BJ (cell line): ENCODE measurements at regions of chr16 and their contacts with region 1.

Region 1: DNA sequence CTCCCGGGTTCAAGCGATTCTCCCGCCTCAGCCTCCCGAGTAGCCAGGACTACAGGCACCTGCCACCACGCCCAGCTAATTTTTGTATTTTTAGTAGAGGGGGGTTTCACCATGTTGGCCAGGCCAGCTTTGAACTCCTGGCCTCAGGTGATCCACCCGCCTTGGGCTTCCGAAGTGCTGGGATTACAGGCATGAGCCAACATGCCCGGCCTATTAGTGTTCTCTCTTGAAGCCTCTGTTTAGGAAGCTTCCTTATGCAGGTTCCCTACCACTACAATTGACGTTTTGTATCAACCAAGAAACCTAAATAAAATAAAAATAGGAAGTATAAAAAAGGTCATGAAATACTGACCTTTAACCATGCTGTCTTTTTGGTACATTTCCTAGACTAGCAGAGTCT is 16.0 kb downstream of the CHST5 start:
- DNase-seq: no peak
- H3K4me3 ChIP-seq: no peak overlapping the region
- H3K27me3 ChIP-seq: no peaks in the 10 kb centered on the region
- CTCF ChIP-seq: no peak

Region 2: GRCh38 chr16:75471723-75472633 is 47.9 kb before region 1 on chr16:
- CTCF ChIA-PET with region 1: interaction called, 30 read pairs
- POLR2A ChIA-PET with region 1: no interaction called
- DNase-seq: no peak
- H3K4me3 ChIP-seq: no peak overlapping the region
- H3K27me3 ChIP-seq: no peaks in the 10 kb centered on the region
- CTCF ChIP-seq: peak; percentile 78

Region 3: DNA sequence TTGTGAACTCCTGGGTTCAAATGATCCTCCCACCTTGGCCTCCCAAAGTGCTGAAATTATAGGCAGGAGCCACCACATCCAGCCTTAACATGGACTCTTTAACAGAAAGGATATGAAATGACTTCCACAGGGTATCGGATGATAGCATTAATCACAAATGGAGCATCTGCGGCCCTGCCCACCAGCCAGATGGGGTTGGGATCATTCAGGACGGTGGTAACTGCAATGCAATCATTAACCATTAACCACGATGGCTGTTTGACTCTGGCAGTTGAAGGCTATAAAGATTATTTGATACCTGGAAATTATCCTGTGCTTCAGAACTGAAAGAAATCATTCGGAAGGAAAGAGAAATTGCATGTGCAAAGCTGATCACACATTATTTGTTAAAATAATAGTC is 21.4 kb after region 1 on chr16:
- CTCF ChIA-PET with region 1: interaction called, 11 read pairs
- POLR2A ChIA-PET with region 1: no interaction called
- DNase-seq: no peak
- H3K4me3 ChIP-seq: no peak overlapping the region
- H3K27me3 ChIP-seq: no peaks in the 10 kb centered on the region
- CTCF ChIP-seq: no peak

Region 4: GRCh38 chr16:75566040-75566810 is 46.3 kb after region 1 on chr16 and contains the start of gene GABARAPL2:
- CTCF ChIA-PET with region 1: interaction called, 11 read pairs
- POLR2A ChIA-PET with region 1: no interaction called
- DNase-seq: no peak
- H3K4me3 ChIP-seq: peak within 1 kb of the TSS; percentile 83
- H3K27me3 ChIP-seq: peaks cover 2% of the 10 kb centered on the region; the same call in 1 of the 2 replicates
- CTCF ChIP-seq: no peak
- polyA plus RNA-seq, gene GABARAPL2: 32.3 and 61.9 TPM in 2 replicates

Region 5: GRCh38 chr16:75622761-75623605 is 103.1 kb after region 1 on chr16 and contains the start of gene ADAT1:
- CTCF ChIA-PET with region 1: interaction called, 20 read pairs
- POLR2A ChIA-PET with region 1: no interaction called
- DNase-seq: peak; percentile 90
- H3K4me3 ChIP-seq: peak within 1 kb of the TSS; percentile 54
- H3K27me3 ChIP-seq: no peaks in the 10 kb centered on the region
- CTCF ChIP-seq: no peak
- polyA plus RNA-seq, gene ADAT1: 18.9 and 26.5 TPM in 2 replicates